HEK293 (cell line): ENCODE measurements at regions of chr11 and their contacts with region 1.

Region 1: GRCh38 chr11:125141686-125142535 is 22.6 kb upstream of the PKNOX2 start:
- H3K4me3 ChIP-seq: no peak overlapping the region
- H3K27ac ChIP-seq: no peak overlapping the region
- H3K4me1 ChIP-seq: no peaks in the 10 kb centered on the region
- CTCF ChIP-seq: peak; percentile 62; the same call in 1 of the 2 replicates

Region 2: GRCh38 chr11:124953753-124954589 is 187.9 kb before region 1 on chr11 and contains the start of gene CCDC15:
- CTCF ChIA-PET with region 1: interaction called, 11 read pairs
- POLR2A ChIA-PET with region 1: no interaction called
- H3K4me3 ChIP-seq: peak within 1 kb of the TSS; percentile 75
- H3K27ac ChIP-seq: peak within 1 kb of the TSS; percentile 47; the same call in 1 of the 2 replicates
- H3K4me1 ChIP-seq: no peaks in the 10 kb centered on the region; the same call in 1 of the 2 replicates
- CTCF ChIP-seq: no peak

Region 3: GRCh38 chr11:125111343-125112207 is 30.3 kb before region 1 on chr11 and contains the start of gene TMEM218:
- CTCF ChIA-PET with region 1: interaction called, 29 read pairs
- POLR2A ChIA-PET with region 1: interaction called, 3 read pairs
- H3K4me3 ChIP-seq: peak within 1 kb of the TSS; percentile 81
- H3K27ac ChIP-seq: no peak within 1 kb of the TSS; the same call in 1 of the 2 replicates
- H3K4me1 ChIP-seq: no peaks in the 10 kb centered on the region
- CTCF ChIP-seq: no peak

Region 4: GRCh38 chr11:125123947-125124617 is 17.8 kb before region 1 on chr11:
- CTCF ChIA-PET with region 1: interaction called, 14 read pairs
- POLR2A ChIA-PET with region 1: interaction called, 5 read pairs
- H3K4me3 ChIP-seq: no peak overlapping the region
- H3K27ac ChIP-seq: no peak overlapping the region
- H3K4me1 ChIP-seq: no peaks in the 10 kb centered on the region
- CTCF ChIP-seq: no peak

Region 5: DNA sequence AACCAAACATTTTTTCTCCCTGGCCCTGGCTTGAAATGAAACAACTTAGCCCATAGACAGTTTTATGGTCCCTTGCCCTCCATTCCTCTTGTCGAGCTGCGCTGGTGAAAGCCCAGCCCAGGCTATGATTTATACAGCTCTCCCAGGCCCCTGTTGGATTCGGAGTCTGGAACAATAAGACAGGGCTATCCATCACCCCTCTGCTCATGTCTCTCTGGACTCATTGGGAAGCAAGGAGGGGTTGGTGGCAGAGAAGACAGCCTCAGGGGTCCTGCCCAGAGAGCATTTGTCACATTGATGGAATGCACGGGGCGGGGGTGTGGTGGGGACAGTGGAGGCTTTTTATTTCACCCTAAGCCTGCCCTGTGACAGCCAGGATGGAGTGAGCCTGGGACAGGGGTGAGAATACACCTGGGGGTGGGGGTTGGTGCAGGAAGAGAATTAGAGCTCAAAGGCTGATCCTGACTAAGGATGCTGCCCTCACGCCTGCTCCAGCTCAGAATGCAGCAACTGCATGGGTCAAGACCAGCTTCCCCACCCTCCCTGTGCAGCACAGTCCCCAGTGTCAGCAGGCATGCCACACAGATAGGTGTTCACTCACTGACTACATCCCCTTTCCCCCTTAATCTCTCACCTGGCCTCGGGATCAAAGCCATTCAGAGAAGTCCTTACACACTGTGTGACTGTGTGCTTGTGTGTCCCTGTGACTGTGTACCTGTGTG is 12.6 kb after region 1 on chr11:
- CTCF ChIA-PET with region 1: interaction called, 14 read pairs
- POLR2A ChIA-PET with region 1: no interaction called
- H3K4me3 ChIP-seq: no peak overlapping the region
- H3K27ac ChIP-seq: no peak overlapping the region
- H3K4me1 ChIP-seq: no peaks in the 10 kb centered on the region
- CTCF ChIP-seq: no peak

Region 6: DNA sequence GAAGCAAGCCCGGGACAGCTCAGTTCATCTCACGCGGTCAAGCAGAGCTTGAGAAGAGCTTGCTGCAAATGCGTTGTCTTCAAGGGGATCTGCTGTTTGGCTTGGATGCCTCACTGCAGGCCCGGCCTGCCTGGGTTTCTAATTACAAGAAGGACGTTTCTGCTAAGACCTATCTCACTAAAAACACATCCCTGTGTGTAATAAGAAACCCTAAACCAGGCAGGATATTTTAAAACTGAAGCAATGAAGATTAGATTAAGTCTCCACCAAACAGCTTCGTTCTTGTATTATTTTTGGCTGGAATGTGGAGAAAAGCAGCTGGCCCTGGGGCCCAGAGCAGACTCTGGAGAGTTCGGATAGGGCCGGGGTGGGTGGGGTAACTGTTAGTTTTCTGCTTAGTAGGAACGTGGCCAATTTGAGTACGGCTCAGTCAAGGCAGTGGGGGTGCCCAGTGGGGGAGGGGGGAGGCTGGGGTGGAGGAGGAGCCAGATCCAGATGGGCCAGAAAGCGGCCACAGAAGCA is 28.7 kb after region 1 on chr11:
- CTCF ChIA-PET with region 1: interaction called, 12 read pairs
- POLR2A ChIA-PET with region 1: no interaction called
- H3K4me3 ChIP-seq: no peak overlapping the region
- H3K27ac ChIP-seq: peak overlapping the region; percentile 87
- H3K4me1 ChIP-seq: peaks cover 19% of the 10 kb centered on the region
- CTCF ChIP-seq: no peak